H1 (cell line): ENCODE measurements at regions of chr1 and their contacts with region 1.

Region 1: GRCh38 chr1:39653546-39654031 is 14.1 kb upstream of the HEYL start:
- DNase-seq: peak; percentile 41 to 77
- H3K4me3 ChIP-seq: no peak overlapping the region
- H3K27ac ChIP-seq: no peak overlapping the region
- H3K4me1 ChIP-seq: no peaks in the 10 kb centered on the region
- H3K27me3 ChIP-seq: peaks cover 0 to 12% (median 4%) of the 10 kb centered on the region in 4 experiments; a peak in 3 of 7 replicates
- CTCF ChIP-seq: peak; percentile 79 to 91 (median 82)
- EP300 ChIP-seq: no peak
- POLR2A ChIP-seq: no peak
- RAD21 ChIP-seq: peak; percentile 86 to 89

Region 2: GRCh38 chr1:39575191-39576015 is 78.2 kb before region 1 on chr1:
- CTCF ChIA-PET with region 1: interaction called, 14 read pairs
- POLR2A ChIA-PET with region 1: interaction called, 5 read pairs
- DNase-seq: no peak
- H3K4me3 ChIP-seq: peak overlapping the region; percentile 68 to 99 (median 73)
- H3K27ac ChIP-seq: no peak overlapping the region
- H3K4me1 ChIP-seq: peaks cover 0 to 19% (median 7%) of the 10 kb centered on the region in 4 experiments; a peak in 5 of 7 replicates
- H3K27me3 ChIP-seq: no peaks in the 10 kb centered on the region
- CTCF ChIP-seq: no peak
- EP300 ChIP-seq: no peak
- POLR2A ChIP-seq: 0 out of 3 replicates have a peak, but pooled peaks of 1 of the 2 experiments have one; percentile 27
- RAD21 ChIP-seq: no peak

Region 3: GRCh38 chr1:39609618-39610331 is 43.8 kb before region 1 on chr1:
- CTCF ChIA-PET with region 1: interaction called, 469 read pairs
- POLR2A ChIA-PET with region 1: interaction called, 4 read pairs
- DNase-seq: peak; percentile 58 to 97
- H3K4me3 ChIP-seq: peak overlapping the region; percentile 59 to 71 (median 60)
- H3K27ac ChIP-seq: no peak overlapping the region
- H3K4me1 ChIP-seq: peaks cover 0 to 5% (median 0%) of the 10 kb centered on the region in 4 experiments; a peak in 2 of 7 replicates
- H3K27me3 ChIP-seq: peaks cover 0 to 13% (median 8%) of the 10 kb centered on the region in 4 experiments; a peak in 6 of 7 replicates
- CTCF ChIP-seq: peak; percentile 90 to 97 (median 91)
- EP300 ChIP-seq: no peak
- POLR2A ChIP-seq: no peak
- RAD21 ChIP-seq: peak; percentile 46 to 62

Region 4: GRCh38 chr1:39625462-39626273 is 27.9 kb before region 1 on chr1:
- CTCF ChIA-PET with region 1: interaction called, 278 read pairs
- POLR2A ChIA-PET with region 1: interaction called, 3 read pairs
- DNase-seq: no peak
- H3K4me3 ChIP-seq: no peak overlapping the region
- H3K27ac ChIP-seq: no peak overlapping the region
- H3K4me1 ChIP-seq: no peaks in the 10 kb centered on the region
- H3K27me3 ChIP-seq: peaks cover 0 to 5% (median 1%) of the 10 kb centered on the region in 4 experiments; a peak in 2 of 7 replicates
- CTCF ChIP-seq: no peak
- EP300 ChIP-seq: no peak
- POLR2A ChIP-seq: no peak
- RAD21 ChIP-seq: no peak

Region 5: DNA sequence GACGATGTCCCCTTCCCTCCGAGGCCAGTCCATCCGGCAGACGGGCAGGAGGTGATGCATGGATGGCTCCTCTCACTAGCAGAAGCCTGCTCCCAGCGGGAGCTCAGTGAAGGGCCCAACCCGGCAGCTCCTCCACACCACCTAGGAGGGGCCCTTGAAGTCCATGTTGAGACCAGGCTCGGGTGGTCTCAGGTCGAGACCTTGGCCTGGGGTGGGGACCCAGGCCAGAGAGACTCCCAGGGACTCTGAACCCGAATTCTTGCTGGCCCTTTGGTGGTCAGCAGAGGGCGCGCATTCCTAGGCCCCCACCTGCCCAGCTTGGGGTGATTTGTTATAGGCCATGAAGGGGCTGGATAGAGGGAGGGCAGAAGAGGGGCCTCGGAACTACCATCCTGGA is 19.0 kb after region 1 on chr1:
- CTCF ChIA-PET with region 1: interaction called, 184 read pairs
- POLR2A ChIA-PET with region 1: interaction called, 3 read pairs
- DNase-seq: peak in 1 of 2 experiments; percentile 81
- H3K4me3 ChIP-seq: peak overlapping the region; percentile 27 to 61 (median 36); a peak in 5 of 8 replicates
- H3K27ac ChIP-seq: no peak overlapping the region
- H3K4me1 ChIP-seq: peaks cover 0 to 11% (median 5%) of the 10 kb centered on the region in 4 experiments; a peak in 5 of 7 replicates
- H3K27me3 ChIP-seq: peaks cover 67 to 93% (median 87%) of the 10 kb centered on the region in 4 experiments
- CTCF ChIP-seq: peak; percentile 67 to 81 (median 74)
- EP300 ChIP-seq: no peak
- POLR2A ChIP-seq: no peak
- RAD21 ChIP-seq: peak; percentile 51 to 69

Region 6: GRCh38 chr1:39691262-39692151 is 37.9 kb after region 1 on chr1 and contains the start of gene HPCAL4:
- CTCF ChIA-PET with region 1: interaction called, 17 read pairs
- POLR2A ChIA-PET with region 1: interaction called, 3 read pairs
- DNase-seq: peak; percentile 77 to 97
- H3K4me3 ChIP-seq: peak within 1 kb of the TSS; percentile 8 to 56 (median 22); a peak in 7 of 8 replicates
- H3K27ac ChIP-seq: no peak within 1 kb of the TSS
- H3K4me1 ChIP-seq: peaks cover 0 to 19% (median 7%) of the 10 kb centered on the region in 4 experiments; a peak in 5 of 7 replicates
- H3K27me3 ChIP-seq: peaks cover 75 to 99% (median 87%) of the 10 kb centered on the region in 4 experiments
- CTCF ChIP-seq: no peak
- EP300 ChIP-seq: no peak
- POLR2A ChIP-seq: no peak
- RAD21 ChIP-seq: no peak
- total RNA-seq, gene HPCAL4: 0.46 and 0.54 TPM in 2 replicates

Region 7: DNA sequence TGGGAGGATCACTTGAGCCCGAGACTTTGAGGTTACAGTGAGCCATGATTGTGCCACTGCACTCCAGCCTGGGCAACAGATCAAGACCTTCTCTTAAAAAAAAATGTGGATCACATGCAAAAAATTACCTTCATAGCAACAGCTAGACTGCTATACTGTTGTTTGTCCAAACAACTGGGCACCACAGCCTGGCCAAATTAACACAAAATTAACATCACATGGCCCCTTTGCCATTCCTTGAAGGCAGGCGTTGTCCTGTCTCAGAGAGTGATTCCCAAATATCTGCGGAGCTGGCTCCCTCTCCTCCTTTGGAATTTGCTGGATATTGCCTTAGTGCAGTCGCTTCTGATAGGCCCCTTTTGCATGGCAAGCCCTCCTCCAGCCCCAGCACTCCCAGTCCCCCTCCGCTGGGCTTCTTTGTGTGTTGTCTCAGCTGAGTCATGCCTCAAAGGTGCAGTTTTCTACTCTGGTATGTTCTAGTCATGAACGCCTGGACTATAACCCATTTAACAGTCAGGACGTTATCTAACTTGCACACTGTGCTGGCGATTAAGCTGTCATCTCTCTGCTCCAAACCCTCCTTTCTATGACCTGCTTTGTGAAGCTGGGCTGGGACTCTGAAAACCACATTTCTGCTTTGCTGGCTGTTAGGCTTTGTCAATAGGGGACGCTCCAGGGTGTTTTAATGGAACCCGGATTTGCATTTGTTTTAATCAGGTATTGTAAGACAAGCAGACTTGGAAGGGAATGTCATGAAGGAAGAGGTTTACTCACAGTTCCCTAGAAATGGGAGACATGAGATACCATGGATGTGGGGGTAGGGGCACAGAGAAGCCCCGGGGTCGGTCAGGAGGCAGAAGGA is 57.7 kb after region 1 on chr1:
- CTCF ChIA-PET with region 1: interaction called, 46 read pairs
- POLR2A ChIA-PET with region 1: no interaction called
- DNase-seq: no peak
- H3K4me3 ChIP-seq: no peak overlapping the region
- H3K27ac ChIP-seq: no peak overlapping the region
- H3K4me1 ChIP-seq: peaks cover 3 to 15% (median 4%) of the 10 kb centered on the region in 4 experiments; a peak in 5 of 7 replicates
- H3K27me3 ChIP-seq: peaks cover 88 to 100% (median 96%) of the 10 kb centered on the region in 4 experiments
- CTCF ChIP-seq: peak in 1 of 3 experiments; percentile 8; a peak in 1 of 4 replicates
- EP300 ChIP-seq: no peak
- POLR2A ChIP-seq: no peak
- RAD21 ChIP-seq: no peak